CD4-positive, alpha-beta T cell (primary cell): ENCODE measurements at regions of chr20 and their contacts with region 1.

Region 1: GRCh38 chr20:9407805-9408421 is 106.5 kb upstream of the LAMP5 start:
- DNase-seq: peak in 9 of 14 experiments; percentile 1 to 61 (median 15)
- ATAC-seq: no peak
- H3K4me3 ChIP-seq: no peak overlapping the region
- H3K4me3 Mint-ChIP-seq: no peak overlapping the region
- H3K27ac ChIP-seq: no peak overlapping the region
- H3K27ac Mint-ChIP-seq: no peak overlapping the region
- H3K4me1 ChIP-seq: no peaks in the 10 kb centered on the region
- H3K4me1 Mint-ChIP-seq: no peaks in the 10 kb centered on the region
- H3K27me3 ChIP-seq: no peaks in the 10 kb centered on the region
- H3K27me3 Mint-ChIP-seq: no peaks in the 10 kb centered on the region
- CTCF ChIP-seq: peak; percentile 71

Region 2: DNA sequence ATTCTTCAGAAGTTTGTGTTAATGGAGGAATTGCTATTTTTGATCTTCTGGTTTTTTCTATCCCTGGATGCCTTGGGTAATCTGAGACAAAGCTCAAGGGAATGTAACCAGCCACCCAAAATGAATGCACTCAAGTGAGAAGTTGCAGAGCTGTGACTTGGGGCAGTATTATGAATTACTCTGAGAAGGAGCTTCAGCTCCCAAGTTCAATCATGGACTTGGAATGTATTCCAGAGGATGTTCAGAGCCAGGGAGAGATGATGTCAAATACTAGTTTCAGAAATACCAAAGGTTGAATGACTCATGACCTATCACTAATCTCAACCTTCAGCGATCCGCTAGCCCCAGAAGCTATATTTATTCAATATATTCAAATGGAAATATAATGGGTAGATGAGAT is 714.2 kb before region 1 on chr20:
- CTCF ChIA-PET with region 1: no interaction called
- POLR2A ChIA-PET with region 1: no interaction called
- intact Hi-C with region 1: no loop called
- DNase-seq: no peak
- ATAC-seq: no peak
- H3K4me3 ChIP-seq: no peak overlapping the region
- H3K4me3 Mint-ChIP-seq: no peak overlapping the region
- H3K27ac ChIP-seq: no peak overlapping the region
- H3K27ac Mint-ChIP-seq: no peak overlapping the region
- H3K4me1 ChIP-seq: no peaks in the 10 kb centered on the region
- H3K4me1 Mint-ChIP-seq: no peaks in the 10 kb centered on the region
- H3K27me3 ChIP-seq: no peaks in the 10 kb centered on the region
- H3K27me3 Mint-ChIP-seq: no peaks in the 10 kb centered on the region
- CTCF ChIP-seq: no peak

Region 3: GRCh38 chr20:9359561-9360308 is 48.2 kb before region 1 on chr20:
- CTCF ChIA-PET with region 1: no interaction called
- POLR2A ChIA-PET with region 1: no interaction called
- intact Hi-C with region 1: loop called in 1 of 2 experiments (anchors 10 kb)
- DNase-seq: peak in 1 of 14 experiments; percentile 2
- ATAC-seq: no peak
- H3K4me3 ChIP-seq: no peak overlapping the region
- H3K4me3 Mint-ChIP-seq: no peak overlapping the region
- H3K27ac ChIP-seq: no peak overlapping the region
- H3K27ac Mint-ChIP-seq: no peak overlapping the region
- H3K4me1 ChIP-seq: no peaks in the 10 kb centered on the region
- H3K4me1 Mint-ChIP-seq: no peaks in the 10 kb centered on the region
- H3K27me3 ChIP-seq: no peaks in the 10 kb centered on the region
- H3K27me3 Mint-ChIP-seq: no peaks in the 10 kb centered on the region
- CTCF ChIP-seq: no peak

Region 4: DNA sequence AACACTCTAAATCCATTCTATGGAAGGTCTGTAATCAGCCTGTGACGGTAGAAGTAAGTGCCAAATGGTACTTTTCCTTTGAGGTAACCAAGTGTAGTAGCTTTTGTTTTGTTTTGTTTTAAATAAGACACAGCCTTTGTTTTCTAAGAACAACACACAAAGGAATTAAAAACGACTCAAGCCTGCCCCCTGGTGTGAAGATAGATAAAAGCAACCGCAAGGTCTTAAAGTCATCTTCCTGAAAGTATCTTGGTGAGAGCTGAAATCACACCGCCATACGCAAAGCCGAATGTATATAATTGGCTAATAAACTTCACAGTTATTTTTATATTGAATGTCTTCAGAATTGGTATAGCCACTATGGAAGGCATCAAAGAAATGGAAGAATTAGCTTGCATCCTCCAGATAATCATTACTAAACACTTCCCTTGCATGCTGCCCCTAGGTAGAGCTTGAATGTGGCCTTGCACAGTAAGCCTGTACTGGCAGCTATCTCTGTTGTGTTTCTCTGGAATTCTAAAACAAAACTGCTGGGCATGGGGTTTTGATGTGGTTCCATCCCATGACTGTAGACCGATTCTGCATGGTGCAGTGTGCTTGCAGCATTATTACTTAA is 202.1 kb after region 1 on chr20:
- CTCF ChIA-PET with region 1: no interaction called
- POLR2A ChIA-PET with region 1: no interaction called
- intact Hi-C with region 1: loop called in 1 of 2 experiments (anchors 5 kb)
- DNase-seq: peak in 6 of 14 experiments; percentile 3 to 60 (median 28)
- ATAC-seq: no peak
- H3K4me3 ChIP-seq: no peak overlapping the region
- H3K4me3 Mint-ChIP-seq: no peak overlapping the region
- H3K27ac ChIP-seq: no peak overlapping the region
- H3K27ac Mint-ChIP-seq: no peak overlapping the region
- H3K4me1 ChIP-seq: no peaks in the 10 kb centered on the region
- H3K4me1 Mint-ChIP-seq: no peaks in the 10 kb centered on the region
- H3K27me3 ChIP-seq: no peaks in the 10 kb centered on the region
- H3K27me3 Mint-ChIP-seq: peaks cover 7% of the 10 kb centered on the region
- CTCF ChIP-seq: peak; percentile 43

Region 5: DNA sequence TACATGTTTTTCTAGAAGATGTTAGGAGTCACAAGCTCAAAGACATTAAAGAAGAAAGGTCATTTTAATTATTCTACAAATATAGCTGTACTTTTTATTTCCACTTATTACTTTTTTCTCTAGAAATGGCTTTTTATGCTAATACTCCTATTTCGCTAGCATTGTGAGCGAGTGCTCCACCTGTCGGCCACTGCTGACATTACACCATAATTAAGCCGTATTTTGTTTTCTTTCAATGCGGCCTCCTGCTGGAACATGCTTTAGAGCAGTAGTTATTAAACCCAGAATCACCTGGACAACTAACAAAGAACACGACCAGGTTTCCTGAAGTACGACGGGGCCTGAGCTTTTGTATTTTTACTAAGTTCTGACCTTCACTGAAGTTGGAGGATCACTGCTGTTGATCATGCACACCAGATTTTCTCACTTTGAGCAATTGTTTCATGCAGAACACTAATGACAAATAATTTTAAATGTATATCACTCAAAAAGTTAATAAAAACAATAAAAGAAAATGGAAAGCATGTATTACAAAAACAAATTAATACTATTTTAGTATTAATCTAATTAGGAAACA is 505.0 kb after region 1 on chr20:
- CTCF ChIA-PET with region 1: no interaction called
- POLR2A ChIA-PET with region 1: no interaction called
- intact Hi-C with region 1: no loop called
- DNase-seq: peak in 9 of 14 experiments; percentile 0 to 37 (median 12)
- ATAC-seq: no peak
- H3K4me3 ChIP-seq: no peak overlapping the region
- H3K4me3 Mint-ChIP-seq: no peak overlapping the region
- H3K27ac ChIP-seq: no peak overlapping the region
- H3K27ac Mint-ChIP-seq: no peak overlapping the region
- H3K4me1 ChIP-seq: no peaks in the 10 kb centered on the region
- H3K4me1 Mint-ChIP-seq: no peaks in the 10 kb centered on the region
- H3K27me3 ChIP-seq: no peaks in the 10 kb centered on the region
- H3K27me3 Mint-ChIP-seq: peaks cover 49% of the 10 kb centered on the region
- CTCF ChIP-seq: peak; percentile 78

Region 6: DNA sequence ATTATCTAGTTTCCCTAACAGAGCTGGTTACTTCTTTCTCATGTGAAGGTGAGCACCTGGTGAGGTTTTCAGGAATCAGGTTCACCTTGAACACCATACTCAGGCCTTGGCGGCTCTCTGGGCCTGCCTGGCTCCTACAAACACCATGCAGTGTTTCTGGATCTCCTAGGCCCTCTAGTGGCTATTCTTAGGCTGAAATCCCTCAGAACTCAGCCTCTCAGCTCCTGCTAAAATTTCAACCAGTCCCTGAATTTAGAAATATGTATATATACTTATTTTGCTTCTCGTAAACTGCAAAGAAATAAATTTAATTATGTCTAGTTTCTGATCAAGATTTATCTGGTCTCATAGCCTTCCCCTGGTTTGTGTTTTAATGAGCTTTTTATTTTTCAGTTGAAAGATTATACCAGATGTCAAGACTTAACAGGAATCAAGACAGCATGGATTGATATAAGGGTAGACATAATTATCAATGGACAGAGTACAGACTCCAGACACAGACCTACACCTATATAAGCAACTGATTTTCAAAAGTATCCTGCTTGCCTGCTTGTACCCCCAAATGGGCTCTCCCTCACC is 682.8 kb after region 1 on chr20:
- CTCF ChIA-PET with region 1: no interaction called
- POLR2A ChIA-PET with region 1: no interaction called
- intact Hi-C with region 1: loop called in 1 of 2 experiments (anchors 5 kb)
- DNase-seq: peak in 7 of 14 experiments; percentile 1 to 62 (median 33)
- ATAC-seq: peak; percentile 51
- H3K4me3 ChIP-seq: no peak overlapping the region
- H3K4me3 Mint-ChIP-seq: no peak overlapping the region
- H3K27ac ChIP-seq: no peak overlapping the region
- H3K27ac Mint-ChIP-seq: no peak overlapping the region
- H3K4me1 ChIP-seq: no peaks in the 10 kb centered on the region
- H3K4me1 Mint-ChIP-seq: no peaks in the 10 kb centered on the region
- H3K27me3 ChIP-seq: no peaks in the 10 kb centered on the region
- H3K27me3 Mint-ChIP-seq: peaks cover 8% of the 10 kb centered on the region
- CTCF ChIP-seq: peak; percentile 74

Region 7: DNA sequence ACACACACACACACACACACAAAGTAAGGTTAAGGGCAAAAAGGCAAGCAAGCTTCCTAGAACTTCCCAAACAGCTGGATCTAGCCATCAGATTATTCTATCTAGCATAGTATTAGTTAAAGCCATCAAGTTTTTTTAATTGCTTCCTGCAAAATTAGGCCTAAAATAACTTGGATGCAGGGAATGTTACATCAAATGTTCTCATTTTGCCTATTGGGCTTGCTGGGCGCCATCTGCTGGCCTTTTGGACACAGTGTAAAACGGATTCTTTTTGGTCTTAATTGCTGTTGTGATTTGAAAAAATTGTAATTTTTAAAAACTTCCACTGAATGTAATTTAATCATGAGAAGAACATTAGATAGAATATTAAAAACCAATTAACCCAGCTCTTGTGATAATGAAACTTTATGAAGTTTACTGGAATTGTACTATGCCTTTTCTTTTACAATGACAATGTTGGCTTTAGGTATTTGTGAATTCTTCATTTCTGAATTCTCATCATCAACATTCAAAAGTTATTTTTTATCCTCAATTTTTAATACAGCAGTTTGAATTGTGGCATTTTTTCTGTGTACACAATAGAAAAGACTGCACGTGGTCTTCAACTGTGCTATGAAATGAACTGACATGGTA is 1019.3 kb after region 1 on chr20:
- CTCF ChIA-PET with region 1: no interaction called
- POLR2A ChIA-PET with region 1: no interaction called
- intact Hi-C with region 1: loop called in 1 of 2 experiments (anchors 10 kb)
- DNase-seq: peak in 13 of 14 experiments; percentile 13 to 70 (median 35)
- ATAC-seq: no peak
- H3K4me3 ChIP-seq: no peak overlapping the region
- H3K4me3 Mint-ChIP-seq: no peak overlapping the region
- H3K27ac ChIP-seq: no peak overlapping the region
- H3K27ac Mint-ChIP-seq: no peak overlapping the region
- H3K4me1 ChIP-seq: no peaks in the 10 kb centered on the region
- H3K4me1 Mint-ChIP-seq: peaks cover 56% of the 10 kb centered on the region
- H3K27me3 ChIP-seq: no peaks in the 10 kb centered on the region
- H3K27me3 Mint-ChIP-seq: no peaks in the 10 kb centered on the region
- CTCF ChIP-seq: peak; percentile 88